CD4-positive, alpha-beta memory T cell (primary cell): ENCODE measurements at regions of chr7 and their contacts with region 1.

Region 1: DNA sequence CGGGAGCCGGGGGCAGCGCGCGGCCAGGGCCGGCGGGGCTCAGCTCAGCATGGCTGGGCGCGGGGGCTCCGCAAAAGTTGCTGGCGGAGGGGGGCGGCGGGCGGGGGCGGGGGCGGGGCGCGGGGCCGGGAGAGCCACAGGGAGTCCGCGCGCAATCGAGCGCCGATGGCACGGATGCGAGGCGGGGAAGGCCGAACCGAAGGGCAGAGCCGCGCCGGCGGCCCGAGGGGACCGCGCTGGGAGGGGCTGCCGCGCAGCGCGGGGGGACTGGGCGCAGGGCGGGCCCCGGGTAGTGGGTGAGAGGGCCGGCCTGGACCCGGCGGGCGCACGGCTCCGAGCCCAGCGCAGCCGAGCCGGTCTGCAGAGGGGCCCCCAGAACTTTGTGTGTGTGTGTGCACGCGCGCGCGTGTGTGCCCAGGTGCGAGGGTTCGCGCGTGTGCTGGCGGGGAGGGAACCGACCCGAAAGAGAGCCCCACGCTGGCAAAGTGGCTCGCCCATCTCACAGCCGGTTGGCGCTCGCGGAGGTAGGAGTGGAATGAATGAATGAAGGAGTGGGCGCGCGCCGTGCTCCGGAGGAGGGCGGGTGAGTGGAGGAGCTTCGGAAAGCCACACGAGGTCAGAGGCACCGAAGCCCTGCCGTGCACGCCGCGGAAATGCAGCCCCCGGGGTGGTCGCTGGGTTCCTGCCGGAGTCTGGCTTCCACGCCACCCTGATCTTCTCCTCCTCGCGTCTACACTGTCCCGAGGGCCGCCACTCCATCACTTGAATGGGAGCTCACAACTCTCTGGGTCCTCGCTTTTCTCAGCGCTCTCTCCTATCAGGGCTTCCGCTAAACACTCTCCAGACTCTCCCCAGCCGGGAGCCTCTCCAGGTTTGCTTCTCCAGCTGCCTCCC is at the start of gene HIPK2:
- DNase-seq: peak; percentile 69 to 80 (median 74)
- H3K4me3 ChIP-seq: peak within 1 kb of the TSS; percentile 73 to 92
- H3K4me3 Mint-ChIP-seq: peak within 1 kb of the TSS; percentile 96 to 100 (median 99)
- H3K27ac ChIP-seq: peak within 1 kb of the TSS; percentile 64
- H3K27ac Mint-ChIP-seq: peak within 1 kb of the TSS; percentile 97 to 99 (median 98)
- H3K4me1 ChIP-seq: peaks cover 40% of the 10 kb centered on the region
- H3K4me1 Mint-ChIP-seq: peaks cover 30 to 57% (median 40%) of the 10 kb centered on the region in 4 donors
- H3K27me3 ChIP-seq: no peaks in the 10 kb centered on the region
- H3K27me3 Mint-ChIP-seq: peaks cover 2 to 7% of the 10 kb centered on the region in 2 donors
- total RNA-seq, gene HIPK2: 31.2 to 34.1 TPM

Region 2: DNA sequence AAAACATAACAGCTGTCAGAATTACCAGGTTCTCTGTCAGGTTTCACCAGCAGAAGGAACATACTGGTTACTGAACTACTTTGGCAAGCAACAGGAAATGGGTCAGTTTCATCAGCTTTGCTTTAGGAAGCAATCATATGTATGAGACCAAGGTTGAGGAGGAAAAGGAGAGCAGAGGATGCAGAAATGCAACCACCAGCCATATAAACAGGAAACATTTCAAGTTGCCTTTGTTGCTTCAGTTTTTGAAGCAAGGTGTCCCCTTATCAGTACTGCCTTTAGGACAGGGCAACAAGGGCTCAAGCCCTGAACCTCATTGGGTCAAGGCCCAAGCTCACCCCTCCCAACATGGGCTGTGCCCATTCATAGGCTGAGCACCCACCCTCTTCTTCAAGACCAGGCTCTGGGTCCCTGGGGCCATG is 10.6 kb before region 1 on chr7:
- CTCF ChIA-PET with region 1: interaction called, 4 read pairs
- POLR2A ChIA-PET with region 1: interaction called, 63 read pairs
- intact Hi-C with region 1: loop called (anchors 1 kb)
- DNase-seq: peak in 4 of 5 donors; percentile 56 to 67 (median 60)
- H3K4me3 ChIP-seq: peak overlapping the region in 1 of 2 donors; percentile 27
- H3K4me3 Mint-ChIP-seq: peak overlapping the region; percentile 0 to 93 (median 60)
- H3K27ac ChIP-seq: peak overlapping the region; percentile 56
- H3K27ac Mint-ChIP-seq: peak overlapping the region; percentile 84 to 91 (median 88)
- H3K4me1 ChIP-seq: peaks cover 58% of the 10 kb centered on the region
- H3K4me1 Mint-ChIP-seq: peaks cover 64 to 88% (median 77%) of the 10 kb centered on the region in 4 donors
- H3K27me3 ChIP-seq: no peaks in the 10 kb centered on the region
- H3K27me3 Mint-ChIP-seq: no peaks in the 10 kb centered on the region

Region 3: DNA sequence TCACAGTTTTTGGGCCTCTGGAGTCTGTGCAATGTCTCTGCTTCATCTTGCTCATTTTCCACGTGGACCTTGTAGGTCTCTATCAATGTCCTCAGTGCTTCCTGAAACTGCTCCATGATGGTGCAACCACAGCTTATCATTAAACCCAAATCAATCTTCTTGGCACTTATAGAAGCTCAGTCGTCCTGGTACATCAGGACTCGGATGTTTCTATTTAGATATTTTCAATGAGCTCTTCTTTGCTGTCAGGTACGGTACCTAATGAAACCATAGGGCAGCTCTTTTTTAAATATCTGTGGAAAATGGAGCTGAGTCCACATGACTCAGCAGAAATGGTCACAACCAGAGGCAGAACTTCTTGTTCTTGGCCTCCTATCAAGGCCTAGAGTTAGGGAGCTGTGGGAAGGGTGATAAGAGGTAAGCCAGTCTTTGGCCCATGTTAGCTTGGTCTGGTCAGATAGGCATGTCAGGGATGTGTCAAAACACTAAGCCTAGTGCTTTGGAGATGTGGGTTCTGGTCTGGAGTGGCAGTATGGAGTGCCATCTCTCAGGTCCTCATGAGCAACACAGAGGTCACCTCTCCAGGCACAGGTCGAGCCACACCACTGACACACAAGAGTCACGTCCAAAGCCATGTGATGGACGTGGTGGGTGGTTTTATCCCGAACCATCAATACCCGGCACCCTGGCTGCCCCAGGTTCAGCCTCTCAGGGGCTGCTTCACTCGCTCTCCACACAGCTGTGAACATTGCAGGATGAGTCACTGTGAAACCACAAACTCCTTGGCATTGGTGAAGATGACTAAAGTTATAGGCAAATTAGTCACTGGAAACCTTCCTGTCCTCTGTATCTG is 137.9 kb after region 1 on chr7:
- CTCF ChIA-PET with region 1: no interaction called
- POLR2A ChIA-PET with region 1: no interaction called
- intact Hi-C with region 1: loop called (anchors 5 kb)
- DNase-seq: peak; percentile 11 to 64 (median 19)
- H3K4me3 ChIP-seq: no peak overlapping the region
- H3K4me3 Mint-ChIP-seq: no peak overlapping the region
- H3K27ac ChIP-seq: no peak overlapping the region
- H3K27ac Mint-ChIP-seq: peak overlapping the region in 2 of 7 donors; percentile 9 to 40
- H3K4me1 ChIP-seq: peaks cover 29% of the 10 kb centered on the region
- H3K4me1 Mint-ChIP-seq: peaks cover 9 to 23% (median 14%) of the 10 kb centered on the region in 4 donors
- H3K27me3 ChIP-seq: no peaks in the 10 kb centered on the region
- H3K27me3 Mint-ChIP-seq: peaks cover 0 to 1% of the 10 kb centered on the region in 2 donors

Region 4: GRCh38 chr7:140003913-140004382 is 225.8 kb after region 1 on chr7:
- CTCF ChIA-PET with region 1: interaction called, 3 read pairs
- POLR2A ChIA-PET with region 1: no interaction called
- intact Hi-C with region 1: loop called (anchors 1 kb)
- DNase-seq: peak in 4 of 5 donors; percentile 22 to 41 (median 32)
- H3K4me3 ChIP-seq: no peak overlapping the region
- H3K4me3 Mint-ChIP-seq: no peak overlapping the region
- H3K27ac ChIP-seq: no peak overlapping the region
- H3K27ac Mint-ChIP-seq: peak overlapping the region in 3 of 7 donors; percentile 8 to 59 (median 38)
- H3K4me1 ChIP-seq: no peaks in the 10 kb centered on the region
- H3K4me1 Mint-ChIP-seq: peaks cover 0 to 5% (median 3%) of the 10 kb centered on the region in 4 donors
- H3K27me3 ChIP-seq: no peaks in the 10 kb centered on the region
- H3K27me3 Mint-ChIP-seq: no peaks in the 10 kb centered on the region

Region 5: GRCh38 chr7:140304191-140304799 is 526.1 kb after region 1 on chr7:
- CTCF ChIA-PET with region 1: no interaction called
- POLR2A ChIA-PET with region 1: no interaction called
- intact Hi-C with region 1: loop called (anchors 2 kb)
- DNase-seq: peak; percentile 39 to 67 (median 56)
- H3K4me3 ChIP-seq: no peak overlapping the region
- H3K4me3 Mint-ChIP-seq: no peak overlapping the region
- H3K27ac ChIP-seq: no peak overlapping the region
- H3K27ac Mint-ChIP-seq: peak overlapping the region in 5 of 7 donors; percentile 35 to 72 (median 63)
- H3K4me1 ChIP-seq: no peaks in the 10 kb centered on the region
- H3K4me1 Mint-ChIP-seq: peaks cover 4 to 7% (median 5%) of the 10 kb centered on the region in 4 donors
- H3K27me3 ChIP-seq: no peaks in the 10 kb centered on the region
- H3K27me3 Mint-ChIP-seq: peaks cover under 1% of the 10 kb centered on the region in 2 donors